Activated CD8-positive, alpha-beta T cell treated with anti-CD3 and anti-CD28 coated beads for 36 hours (primary cell): ENCODE measurements at regions of chr6 and their contacts with region 1.

Region 1: DNA sequence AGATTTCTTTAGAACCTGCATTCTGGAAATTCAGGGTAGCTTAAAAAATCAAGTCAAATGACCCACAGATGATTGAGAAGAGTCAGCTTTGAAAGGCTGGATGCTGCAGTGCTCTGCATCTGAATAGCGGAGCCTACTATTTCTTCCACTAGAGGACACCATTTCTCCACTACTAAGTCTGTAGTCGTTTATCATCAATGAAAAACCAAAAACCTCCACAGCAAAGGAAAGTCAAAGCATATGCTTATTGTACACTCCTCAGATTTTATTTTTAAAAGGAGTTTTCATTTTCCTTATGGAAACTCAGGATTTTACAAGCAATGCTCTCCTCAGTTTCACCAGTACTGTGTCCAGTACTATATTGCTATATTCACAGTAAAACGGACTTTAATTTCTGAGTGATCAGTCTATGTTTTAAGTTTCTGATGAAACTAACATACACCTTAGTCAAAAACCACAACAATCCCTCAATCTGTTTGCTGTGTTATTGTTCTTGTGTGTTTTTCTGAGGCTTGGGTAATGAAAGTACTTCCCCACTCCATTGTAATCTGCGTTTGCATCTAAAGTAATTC is 50.5 kb upstream of the ENPP5 start:
- DNase-seq: peak; percentile 3
- ATAC-seq: peak; percentile 57
- H3K4me3 Mint-ChIP-seq: no peak overlapping the region
- H3K27ac Mint-ChIP-seq: peak overlapping the region; percentile 83
- H3K4me1 Mint-ChIP-seq: peaks cover 21% of the 10 kb centered on the region
- H3K27me3 Mint-ChIP-seq: no peaks in the 10 kb centered on the region
- CTCF ChIP-seq: peak; percentile 74

Region 2: DNA sequence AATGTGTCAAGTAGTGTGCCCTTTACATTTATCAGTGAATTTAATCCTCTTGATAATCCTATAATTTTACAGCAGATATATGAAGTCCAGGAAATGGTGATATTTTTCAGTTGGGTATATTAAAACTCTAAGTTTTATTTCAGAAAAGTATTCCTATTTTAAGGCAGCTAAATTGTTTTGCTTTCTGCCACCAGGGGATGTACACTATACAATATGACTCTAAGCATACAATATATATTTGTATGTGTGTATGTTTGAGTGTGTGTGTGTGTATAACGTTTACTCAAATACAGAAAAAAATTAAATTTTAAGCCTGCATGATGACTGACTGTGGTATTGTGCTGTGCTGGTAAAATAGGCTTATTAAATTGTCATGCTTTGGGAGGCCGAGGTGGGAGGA is 995.2 kb before region 1 on chr6:
- CTCF ChIA-PET with region 1: no interaction called
- POLR2A ChIA-PET with region 1: no interaction called
- intact Hi-C with region 1: no loop called
- DNase-seq: no peak
- ATAC-seq: no peak
- H3K4me3 Mint-ChIP-seq: no peak overlapping the region
- H3K27ac Mint-ChIP-seq: no peak overlapping the region
- H3K4me1 Mint-ChIP-seq: no peaks in the 10 kb centered on the region
- H3K27me3 Mint-ChIP-seq: no peaks in the 10 kb centered on the region
- CTCF ChIP-seq: no peak

Region 3: GRCh38 chr6:46410334-46410953 is 189.1 kb after region 1 on chr6:
- CTCF ChIA-PET with region 1: interaction called, 24 read pairs
- POLR2A ChIA-PET with region 1: no interaction called
- intact Hi-C with region 1: loop called (anchors 2 kb)
- DNase-seq: peak; percentile 14
- ATAC-seq: no peak
- H3K4me3 Mint-ChIP-seq: no peak overlapping the region
- H3K27ac Mint-ChIP-seq: no peak overlapping the region
- H3K4me1 Mint-ChIP-seq: no peaks in the 10 kb centered on the region
- H3K27me3 Mint-ChIP-seq: peaks cover 1% of the 10 kb centered on the region
- CTCF ChIP-seq: peak; percentile 82

Region 4: GRCh38 chr6:46626228-46626909 is 405.1 kb after region 1 on chr6:
- CTCF ChIA-PET with region 1: no interaction called
- POLR2A ChIA-PET with region 1: no interaction called
- intact Hi-C with region 1: loop called (anchors 10 kb)
- DNase-seq: no peak
- ATAC-seq: no peak
- H3K4me3 Mint-ChIP-seq: no peak overlapping the region
- H3K27ac Mint-ChIP-seq: no peak overlapping the region
- H3K4me1 Mint-ChIP-seq: no peaks in the 10 kb centered on the region
- H3K27me3 Mint-ChIP-seq: peaks cover 15% of the 10 kb centered on the region
- CTCF ChIP-seq: peak; percentile 48